A549 (cell line): ENCODE measurements at regions of chr9 and their contacts with region 1.

Region 1: GRCh38 chr9:127943731-127944144 is 6.1 kb upstream of the DPM2 start:
- DNase-seq: peak; percentile 79 to 86
- ATAC-seq: peak; percentile 70 to 89
- H3K4me3 ChIP-seq: no peak overlapping the region
- H3K27ac ChIP-seq: peak overlapping the region; percentile 34 to 58; a peak in 4 of 6 replicates
- H3K4me1 ChIP-seq: peaks cover 18% of the 10 kb centered on the region; the same call in 2 of the 3 replicates
- CTCF ChIP-seq: peak; percentile 82
- EP300 ChIP-seq: no peak; a peak in 1 of 5 replicates
- POLR2A ChIP-seq: no peak
- RAD21 ChIP-seq: peak; percentile 93 to 95

Region 2: GRCh38 chr9:127489471-127490115 is 454.1 kb before region 1 on chr9:
- CTCF ChIA-PET with region 1: no interaction called
- POLR2A ChIA-PET with region 1: no interaction called
- DNase-seq: no peak
- ATAC-seq: peak in 1 of 2 experiments; percentile 60; a peak in 3 of 6 replicates
- H3K4me3 ChIP-seq: no peak overlapping the region
- H3K27ac ChIP-seq: no peak overlapping the region
- H3K4me1 ChIP-seq: no peaks in the 10 kb centered on the region
- CTCF ChIP-seq: no peak
- EP300 ChIP-seq: no peak
- POLR2A ChIP-seq: no peak
- RAD21 ChIP-seq: no peak

Region 3: GRCh38 chr9:127796225-127796813 is 147.4 kb before region 1 on chr9:
- CTCF ChIA-PET with region 1: no interaction called
- POLR2A ChIA-PET with region 1: no interaction called
- DNase-seq: no peak
- ATAC-seq: peak; percentile 50 to 65
- H3K4me3 ChIP-seq: no peak overlapping the region
- H3K27ac ChIP-seq: no peak overlapping the region
- H3K4me1 ChIP-seq: peaks cover 27% of the 10 kb centered on the region; the same call in 2 of the 3 replicates
- CTCF ChIP-seq: no peak
- EP300 ChIP-seq: no peak
- POLR2A ChIP-seq: no peak
- RAD21 ChIP-seq: no peak

Region 4: GRCh38 chr9:127930231-127931091 is 13.3 kb before region 1 on chr9 and contains the start of gene PIP5KL1:
- CTCF ChIA-PET with region 1: interaction called, 43 read pairs
- POLR2A ChIA-PET with region 1: no interaction called
- DNase-seq: peak; percentile 89 to 95
- ATAC-seq: peak; percentile 72 to 86
- H3K4me3 ChIP-seq: peak within 1 kb of the TSS; percentile 54
- H3K27ac ChIP-seq: peak within 1 kb of the TSS; percentile 83 to 84
- H3K4me1 ChIP-seq: peaks cover 45% of the 10 kb centered on the region
- CTCF ChIP-seq: peak; percentile 10; the same call in 1 of the 3 replicates
- EP300 ChIP-seq: no peak
- POLR2A ChIP-seq: peak; percentile 13; the same call in 1 of the 2 replicates
- RAD21 ChIP-seq: no peak
- polyA plus RNA-seq, gene PIP5KL1: 1.8 and 2.4 TPM in 2 replicates

Region 5: GRCh38 chr9:127987103-127987614 is 43.4 kb after region 1 on chr9:
- CTCF ChIA-PET with region 1: interaction called, 173 read pairs
- POLR2A ChIA-PET with region 1: no interaction called
- DNase-seq: peak; percentile 81 to 88
- ATAC-seq: peak; percentile 87 to 92
- H3K4me3 ChIP-seq: no peak overlapping the region
- H3K27ac ChIP-seq: peak overlapping the region; percentile 83 to 86
- H3K4me1 ChIP-seq: peaks cover 45% of the 10 kb centered on the region
- CTCF ChIP-seq: no peak
- EP300 ChIP-seq: peak; percentile 37 to 51; a peak in 2 of 5 replicates
- POLR2A ChIP-seq: no peak
- RAD21 ChIP-seq: no peak

Region 6: GRCh38 chr9:128020692-128021091 is 77.0 kb after region 1 on chr9:
- CTCF ChIA-PET with region 1: interaction called, 827 read pairs
- POLR2A ChIA-PET with region 1: no interaction called
- DNase-seq: no peak
- ATAC-seq: peak in 1 of 2 experiments; percentile 32; a peak in 3 of 6 replicates
- H3K4me3 ChIP-seq: no peak overlapping the region
- H3K27ac ChIP-seq: 0 out of 6 replicates have a peak overlapping the region, but pooled peaks of 1 of the 2 experiments have one; percentile 11
- H3K4me1 ChIP-seq: peaks cover 16% of the 10 kb centered on the region
- CTCF ChIP-seq: no peak
- EP300 ChIP-seq: no peak
- POLR2A ChIP-seq: no peak
- RAD21 ChIP-seq: no peak

Region 7: DNA sequence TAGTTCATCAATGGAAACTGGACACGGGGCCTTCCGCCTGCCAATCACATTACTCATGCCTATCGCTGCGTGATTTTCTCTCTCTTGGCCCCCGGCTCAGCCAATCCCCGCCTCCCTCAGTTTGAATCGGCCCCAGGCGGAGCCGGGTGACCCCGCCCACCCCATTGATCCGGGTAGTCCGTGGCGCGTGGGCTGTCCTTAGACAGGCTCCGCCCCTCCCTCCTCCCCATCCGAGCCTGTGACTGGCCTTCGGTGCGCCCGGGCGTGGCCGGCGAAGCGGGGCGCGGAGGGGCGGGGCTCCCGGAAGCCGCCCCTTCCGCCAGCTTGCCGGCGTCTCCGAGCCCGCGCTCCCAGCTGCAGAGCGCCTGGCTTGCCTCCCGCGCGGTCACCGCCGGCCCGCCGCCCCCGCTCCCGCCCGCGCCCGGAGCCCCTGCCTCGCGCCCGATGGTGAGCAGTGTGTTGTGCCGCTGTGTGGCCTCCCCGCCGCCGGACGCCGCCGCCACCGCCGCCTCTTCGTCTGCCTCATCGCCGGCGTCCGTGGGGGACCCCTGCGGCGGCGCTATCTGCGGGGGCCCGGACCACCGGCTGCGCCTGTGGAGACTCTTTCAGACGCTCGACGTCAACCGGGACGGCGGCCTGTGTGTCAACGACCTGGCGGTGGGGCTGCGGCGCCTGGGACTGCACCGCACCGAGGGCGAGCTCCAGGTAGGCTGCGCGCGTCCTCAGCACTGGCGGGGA is 124.3 kb after region 1 on chr9 and contains the start of gene SLC25A25:
- CTCF ChIA-PET with region 1: interaction called, 46 read pairs
- POLR2A ChIA-PET with region 1: interaction called, 5 read pairs
- DNase-seq: peak; percentile 96 to 99
- ATAC-seq: peak; percentile 80 to 86
- H3K4me3 ChIP-seq: peak within 1 kb of the TSS; percentile 84
- H3K27ac ChIP-seq: peak within 1 kb of the TSS; percentile 93 to 99
- H3K4me1 ChIP-seq: peaks cover 41% of the 10 kb centered on the region
- CTCF ChIP-seq: no peak
- EP300 ChIP-seq: no peak
- POLR2A ChIP-seq: peak; percentile 70
- RAD21 ChIP-seq: no peak; a peak in 1 of 5 replicates
- polyA plus RNA-seq, gene SLC25A25: 7.0 TPM in 2 replicates

Region 8: GRCh38 chr9:128088253-128088945 is 144.7 kb after region 1 on chr9:
- CTCF ChIA-PET with region 1: interaction called, 49 read pairs
- POLR2A ChIA-PET with region 1: no interaction called
- DNase-seq: no peak
- ATAC-seq: no peak
- H3K4me3 ChIP-seq: no peak overlapping the region
- H3K27ac ChIP-seq: no peak overlapping the region
- H3K4me1 ChIP-seq: peaks cover 7% of the 10 kb centered on the region; the same call in 2 of the 3 replicates
- CTCF ChIP-seq: no peak
- EP300 ChIP-seq: no peak
- POLR2A ChIP-seq: no peak
- RAD21 ChIP-seq: no peak